T-cell (primary cell): ENCODE measurements at regions of chr14 and their contacts with region 1.

Region 1: DNA sequence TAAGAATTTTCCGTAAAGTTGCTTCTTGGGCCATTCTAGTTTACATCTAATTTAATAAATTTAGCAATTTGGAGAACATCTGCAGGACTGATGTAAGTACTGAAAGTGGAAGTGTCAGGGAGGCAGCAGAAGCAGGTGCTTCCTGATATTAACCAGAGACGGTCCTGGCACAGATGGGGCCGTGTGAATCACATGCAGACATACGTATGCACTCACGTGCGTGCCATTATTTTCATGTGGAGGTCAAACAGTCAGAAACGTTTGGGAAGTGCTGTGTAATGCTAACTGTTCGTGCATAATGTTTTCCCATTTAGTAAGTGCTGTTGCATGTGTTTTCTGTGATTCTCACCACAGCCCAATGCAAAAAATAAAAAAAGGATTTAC is 87.8 kb upstream of the DYNC1H1 start:
- DNase-seq: peak in 34 of 35 experiments; percentile 40 to 89 (median 73)
- ATAC-seq: peak; percentile 83 to 97 (median 83)
- H3K4me3 ChIP-seq: peak overlapping the region in 1 of 2 donors; percentile 20
- H3K4me3 Mint-ChIP-seq: peak overlapping the region; percentile 55 to 66 (median 66)
- H3K27ac ChIP-seq: peak overlapping the region; percentile 77
- H3K27ac Mint-ChIP-seq: peak overlapping the region; percentile 82 to 91
- H3K4me1 ChIP-seq: peaks cover 14 to 64% of the 10 kb centered on the region in 2 experiments
- H3K4me1 Mint-ChIP-seq: peaks cover 78 to 93% (median 85%) of the 10 kb centered on the region in 3 donors
- H3K27me3 ChIP-seq: no peaks in the 10 kb centered on the region
- H3K27me3 Mint-ChIP-seq: no peaks in the 10 kb centered on the region

Region 2: DNA sequence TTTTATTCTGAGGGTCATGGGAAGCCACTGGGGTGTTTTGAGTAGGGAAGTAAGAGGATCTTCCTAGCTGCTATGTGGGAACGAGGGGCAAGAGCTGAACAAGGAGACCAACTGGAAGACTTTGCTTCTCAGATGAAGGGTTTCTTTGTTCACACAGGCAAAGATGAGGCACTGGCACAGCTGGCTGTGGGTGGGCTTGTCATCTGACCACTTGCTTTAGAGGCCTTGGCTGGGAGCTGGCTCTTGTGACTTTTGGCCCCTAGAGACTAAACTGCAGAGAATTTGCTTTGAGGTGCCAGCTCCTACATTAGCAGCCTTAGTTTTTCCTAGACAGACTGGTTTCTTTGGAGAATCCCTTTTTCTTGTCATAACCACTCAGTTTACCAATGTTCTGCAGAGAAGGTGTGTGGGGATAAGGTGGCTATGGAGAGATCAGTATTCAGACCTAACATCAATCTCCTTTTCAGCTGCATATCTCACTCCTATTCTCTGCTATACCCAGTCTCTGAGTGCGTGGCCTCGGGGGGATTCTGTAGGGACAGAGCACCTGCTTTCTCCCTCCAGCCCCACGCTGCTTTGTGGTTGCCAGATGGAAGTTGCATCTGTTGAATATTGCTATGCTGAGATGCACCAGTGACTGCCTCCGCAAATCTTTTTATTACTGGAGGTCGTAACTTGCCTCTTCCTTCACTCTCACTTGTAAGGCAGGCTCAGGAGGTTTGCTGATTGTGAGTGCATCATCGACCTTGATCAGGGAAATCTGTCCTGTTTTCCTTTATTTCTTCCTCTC is 102.3 kb before region 1 on chr14:
- CTCF ChIA-PET with region 1: interaction called in 1 of 2 experiments, 3 read pairs
- POLR2A ChIA-PET with region 1: interaction called in 1 of 2 experiments, 10 read pairs
- DNase-seq: peak in 1 of 35 experiments; percentile 20
- ATAC-seq: no peak
- H3K4me3 ChIP-seq: no peak overlapping the region
- H3K4me3 Mint-ChIP-seq: no peak overlapping the region
- H3K27ac ChIP-seq: no peak overlapping the region
- H3K27ac Mint-ChIP-seq: peak overlapping the region; percentile 34 to 59
- H3K4me1 ChIP-seq: peaks cover 0 to 25% of the 10 kb centered on the region in 2 experiments
- H3K4me1 Mint-ChIP-seq: peaks cover 48 to 59% (median 53%) of the 10 kb centered on the region in 3 donors
- H3K27me3 ChIP-seq: no peaks in the 10 kb centered on the region
- H3K27me3 Mint-ChIP-seq: peaks cover 0 to 2% of the 10 kb centered on the region in 2 donors

Region 3: GRCh38 chr14:101862711-101863110 is 13.8 kb before region 1 on chr14:
- CTCF ChIA-PET with region 1: interaction called in 1 of 2 experiments, 3 read pairs
- POLR2A ChIA-PET with region 1: interaction called in 1 of 2 experiments, 11 read pairs
- DNase-seq: no peak
- ATAC-seq: no peak
- H3K4me3 ChIP-seq: no peak overlapping the region
- H3K4me3 Mint-ChIP-seq: no peak overlapping the region
- H3K27ac ChIP-seq: no peak overlapping the region
- H3K27ac Mint-ChIP-seq: no peak overlapping the region
- H3K4me1 ChIP-seq: peaks cover 0 to 27% of the 10 kb centered on the region in 2 experiments
- H3K4me1 Mint-ChIP-seq: peaks cover 45 to 74% (median 66%) of the 10 kb centered on the region in 3 donors
- H3K27me3 ChIP-seq: no peaks in the 10 kb centered on the region
- H3K27me3 Mint-ChIP-seq: no peaks in the 10 kb centered on the region